ENCODE measurements at regions of chr3 and their contacts with region 1.

Region 1: GRCh38 chr3:12891985-12892839 is 50.8 kb upstream of the RPL32 start:
- DNase-seq: peak; percentile 57
- CTCF ChIP-seq: peak; percentile 96

Region 2: GRCh38 chr3:12706504-12707253 is 185.5 kb before region 1 on chr3:
- CTCF ChIA-PET with region 1: interaction called, 12 read pairs
- POLR2A ChIA-PET with region 1: no interaction called
- DNase-seq: peak; percentile 76
- CTCF ChIP-seq: peak; percentile 89

Region 3: DNA sequence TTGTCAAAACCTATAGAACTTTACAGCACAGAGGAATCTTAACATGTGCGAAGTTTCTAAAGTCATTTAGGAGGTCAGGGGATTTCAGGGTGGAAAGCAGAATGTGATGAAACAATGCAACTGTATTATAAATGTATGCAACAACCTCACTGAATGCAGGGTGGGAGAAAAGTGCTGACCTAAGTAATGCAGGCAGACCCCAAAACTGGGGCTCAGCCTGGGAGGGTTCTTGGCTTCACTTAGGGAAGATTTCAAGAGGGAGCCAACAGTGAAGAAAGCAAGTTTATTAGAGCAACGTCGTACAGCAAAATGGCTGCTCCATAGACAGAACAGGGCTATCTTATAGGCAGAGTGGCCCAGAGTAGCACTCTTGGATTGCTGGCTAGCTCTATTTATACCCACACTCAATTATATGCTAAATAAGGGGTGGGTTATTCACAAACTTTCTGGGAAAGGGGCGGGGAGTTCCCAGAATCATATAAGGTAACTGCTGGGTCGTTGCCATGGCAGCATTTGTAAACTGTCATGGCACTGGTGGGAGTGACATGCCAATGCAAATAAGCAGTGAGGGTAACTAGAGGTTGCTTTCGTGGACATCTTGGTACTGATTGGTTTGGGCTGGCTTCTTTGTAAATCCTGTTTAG is 109.9 kb before region 1 on chr3:
- CTCF ChIA-PET with region 1: interaction called, 33 read pairs
- POLR2A ChIA-PET with region 1: no interaction called
- DNase-seq: no peak
- CTCF ChIP-seq: no peak

Region 4: DNA sequence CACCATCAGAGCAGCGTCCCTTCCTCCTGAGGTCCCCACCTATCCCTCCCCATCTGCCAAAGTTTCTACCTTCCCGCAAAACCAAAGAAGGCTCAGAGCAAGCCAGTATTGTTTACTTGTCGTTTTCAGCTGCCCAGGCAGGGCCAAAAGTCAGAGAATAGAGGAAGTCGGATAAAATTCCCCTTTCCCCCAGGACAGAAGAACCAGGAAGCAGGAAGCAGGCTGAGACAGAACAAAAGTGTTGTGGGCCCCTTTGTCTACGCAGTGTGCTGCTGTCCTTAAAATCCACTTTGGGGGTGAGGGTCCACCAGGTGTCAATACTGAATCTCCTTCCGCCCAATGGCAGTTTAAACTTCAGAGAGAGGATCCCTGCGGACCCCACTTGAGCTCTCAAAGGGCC is 32.4 kb before region 1 on chr3:
- CTCF ChIA-PET with region 1: interaction called, 14 read pairs
- POLR2A ChIA-PET with region 1: no interaction called
- DNase-seq: no peak
- CTCF ChIP-seq: no peak

Region 5: GRCh38 chr3:12868039-12869034 is 23.9 kb before region 1 on chr3:
- CTCF ChIA-PET with region 1: interaction called, 35 read pairs
- POLR2A ChIA-PET with region 1: interaction called, 4 read pairs
- DNase-seq: peak; percentile 79
- CTCF ChIP-seq: peak; percentile 95

Region 6: DNA sequence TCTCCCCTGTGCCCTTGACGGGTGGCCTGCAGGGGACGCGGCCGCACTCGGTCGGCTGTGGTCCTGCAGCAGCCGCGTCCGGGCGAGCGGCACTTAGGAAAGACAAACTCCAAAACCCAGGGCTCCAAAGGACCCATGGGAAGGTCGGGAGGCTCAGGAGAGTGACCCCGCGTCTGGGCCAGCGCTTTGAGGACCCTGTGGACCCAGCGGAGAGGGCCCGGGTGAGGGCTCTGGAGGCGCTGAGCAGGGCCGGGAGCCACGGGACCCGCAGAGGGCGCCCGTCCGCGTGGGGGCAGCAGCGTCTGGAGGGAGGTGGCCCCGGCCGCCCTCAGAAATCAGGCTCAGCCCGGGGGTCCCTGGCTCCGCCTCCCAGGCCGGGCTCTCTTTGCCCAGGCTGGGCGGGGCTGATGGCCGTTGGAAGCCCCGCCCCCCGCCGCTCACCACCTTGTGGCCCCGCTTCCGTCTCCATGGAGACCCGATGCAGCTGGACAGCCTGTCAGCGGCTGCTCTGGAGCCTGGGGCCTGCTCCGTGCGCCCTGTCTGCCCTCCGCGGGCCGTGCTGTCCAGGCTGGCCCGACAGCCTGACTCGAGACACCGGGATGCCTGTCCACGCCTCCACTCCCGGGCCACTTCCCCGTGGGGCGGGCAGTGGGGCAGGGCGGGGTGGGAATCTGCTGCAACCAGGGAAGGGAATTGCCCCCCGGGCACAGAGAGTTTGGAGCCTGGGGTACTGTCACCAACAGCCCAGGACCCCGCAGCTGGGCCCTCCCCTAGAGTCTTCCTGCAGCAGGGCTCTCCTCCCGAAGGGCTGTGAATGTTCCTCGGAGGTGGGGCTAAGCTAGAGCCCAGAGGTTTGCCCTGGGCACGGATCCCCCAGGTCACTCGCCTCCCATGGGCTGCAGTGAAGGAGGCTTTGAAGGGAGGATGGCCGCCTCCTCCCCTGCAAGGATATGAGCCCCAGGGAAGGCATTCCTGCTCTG is 16.1 kb before region 1 on chr3:
- CTCF ChIA-PET with region 1: interaction called, 35 read pairs
- POLR2A ChIA-PET with region 1: no interaction called
- DNase-seq: peak; percentile 54
- CTCF ChIP-seq: peak; percentile 40

Region 7: DNA sequence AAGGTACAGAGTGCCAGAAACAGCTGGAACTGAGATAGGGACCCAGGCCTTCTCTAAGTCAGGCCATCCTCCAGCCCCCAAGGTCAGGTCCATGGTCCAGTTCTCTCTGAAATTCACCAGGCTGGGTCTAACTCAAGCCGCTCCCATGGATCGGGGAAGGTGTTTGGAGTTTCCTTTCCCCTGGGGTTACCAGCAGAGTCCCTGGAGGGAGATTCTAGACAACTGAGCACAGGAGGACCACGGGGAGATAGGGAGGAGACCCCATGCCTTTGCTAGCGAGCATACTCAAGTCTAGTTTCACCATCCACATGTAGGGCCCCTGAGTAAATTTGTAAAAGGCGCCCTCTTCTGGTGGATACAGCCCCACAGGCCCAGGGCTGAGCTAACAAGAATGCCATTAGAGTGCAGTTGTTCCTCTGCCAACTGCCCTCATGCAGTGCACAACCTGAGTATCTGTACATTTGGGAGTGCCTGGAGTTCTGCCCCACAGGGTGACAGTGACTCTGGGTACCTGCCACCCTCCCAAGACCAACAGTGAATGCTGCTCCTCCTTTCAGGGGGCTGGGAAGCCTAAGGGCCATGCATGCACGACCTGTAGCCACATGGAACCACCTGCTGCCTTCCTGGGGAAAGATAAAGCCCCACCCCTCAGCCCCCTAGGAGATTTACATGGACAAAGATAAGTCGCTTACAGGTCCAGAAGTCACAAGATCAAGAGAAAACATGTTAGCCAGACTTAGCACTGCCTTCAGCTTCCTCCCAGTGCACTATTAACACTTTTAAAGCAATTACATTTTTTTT is 92.0 kb after region 1 on chr3:
- CTCF ChIA-PET with region 1: interaction called, 19 read pairs
- POLR2A ChIA-PET with region 1: no interaction called
- DNase-seq: peak; percentile 73
- CTCF ChIP-seq: peak; percentile 65

Measured in GM10248 (cell line).